Activated B cell treated with CpG ODN at 0.5 μM for 24 hours (primary cell): ENCODE measurements at regions of chr5 and their contacts with region 1.

Region 1: DNA sequence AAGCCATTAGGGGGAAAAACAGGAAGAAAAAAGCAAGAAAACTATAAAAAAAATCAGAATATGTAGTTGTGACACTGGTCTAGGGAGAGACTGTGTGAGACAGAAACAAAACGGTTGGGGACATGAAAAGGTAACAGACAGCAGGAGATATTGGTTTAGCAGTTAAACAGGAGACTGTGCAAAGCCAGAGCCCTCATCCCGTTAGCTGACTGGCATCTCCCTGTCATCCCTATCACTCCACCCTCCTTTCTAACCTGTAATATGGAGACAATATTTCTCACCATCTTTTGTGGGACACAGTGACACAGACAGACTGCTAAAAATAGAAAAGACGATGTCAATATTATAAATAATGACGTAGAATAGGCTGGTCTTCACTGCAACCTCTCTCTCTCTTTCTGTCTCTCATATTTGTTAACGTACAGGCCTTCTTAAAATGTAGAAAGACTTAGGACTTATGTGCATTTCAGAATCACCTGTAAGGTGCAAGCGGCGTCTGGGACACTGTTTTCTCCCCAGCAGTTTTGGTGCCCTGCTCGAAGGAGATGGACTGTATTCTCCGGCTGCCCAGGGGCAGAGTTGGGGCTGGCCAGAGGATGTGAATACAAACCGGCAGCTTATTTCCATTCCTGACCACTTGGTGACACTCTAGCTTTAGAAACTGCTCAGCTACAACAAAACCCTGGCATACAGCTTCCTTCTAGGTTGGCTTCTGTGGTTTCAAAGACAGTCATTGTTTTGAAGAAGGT is 190.6 kb downstream of the MAT2B start:
- DNase-seq: no peak
- ATAC-seq: peak; percentile 95
- H3K4me3 Mint-ChIP-seq: no peak overlapping the region
- H3K27ac Mint-ChIP-seq: no peak overlapping the region
- H3K4me1 Mint-ChIP-seq: peaks cover 9% of the 10 kb centered on the region
- H3K27me3 Mint-ChIP-seq: peaks cover 2% of the 10 kb centered on the region
- CTCF ChIP-seq: peak; percentile 73

Region 2: DNA sequence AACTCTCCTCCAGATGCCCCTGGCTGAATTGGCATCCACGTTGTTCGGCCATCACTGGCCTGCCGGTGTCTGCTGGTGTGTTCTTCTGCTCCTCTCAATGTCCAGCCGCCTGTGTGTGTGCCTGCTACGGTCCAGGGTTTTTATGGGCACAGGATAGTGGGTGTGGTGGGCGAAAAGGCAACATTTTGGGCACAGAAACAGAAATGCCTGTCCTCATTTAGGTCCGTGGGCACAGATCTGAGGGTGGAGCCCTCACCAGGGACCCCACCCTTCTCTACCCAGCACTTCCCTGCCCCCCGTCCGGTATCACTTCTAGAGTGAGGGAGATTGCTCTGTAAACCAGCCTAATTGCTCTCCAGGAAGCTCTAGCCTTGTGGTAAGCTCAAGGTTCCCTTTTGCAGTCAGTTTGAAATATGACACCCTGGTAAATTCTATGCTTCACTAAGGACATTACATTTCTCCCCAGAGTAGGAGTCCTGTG is 219.5 kb after region 1 on chr5:
- CTCF ChIA-PET with region 1: interaction called, 5 read pairs
- POLR2A ChIA-PET with region 1: interaction called, 8 read pairs
- intact Hi-C with region 1: loop called (anchors 1 kb)
- DNase-seq: peak; percentile 50
- ATAC-seq: peak; percentile 59
- H3K4me3 Mint-ChIP-seq: peak overlapping the region; percentile 85
- H3K27ac Mint-ChIP-seq: peak overlapping the region; percentile 99
- H3K4me1 Mint-ChIP-seq: peaks cover 74% of the 10 kb centered on the region
- H3K27me3 Mint-ChIP-seq: no peaks in the 10 kb centered on the region
- CTCF ChIP-seq: no peak

Region 3: GRCh38 chr5:164013077-164013670 is 317.2 kb after region 1 on chr5:
- CTCF ChIA-PET with region 1: interaction called, 29 read pairs
- POLR2A ChIA-PET with region 1: no interaction called
- intact Hi-C with region 1: loop called (anchors 1 kb)
- DNase-seq: no peak
- ATAC-seq: peak; percentile 50
- H3K4me3 Mint-ChIP-seq: no peak overlapping the region
- H3K27ac Mint-ChIP-seq: no peak overlapping the region
- H3K4me1 Mint-ChIP-seq: peaks cover 13% of the 10 kb centered on the region
- H3K27me3 Mint-ChIP-seq: no peaks in the 10 kb centered on the region
- CTCF ChIP-seq: no peak

Region 4: DNA sequence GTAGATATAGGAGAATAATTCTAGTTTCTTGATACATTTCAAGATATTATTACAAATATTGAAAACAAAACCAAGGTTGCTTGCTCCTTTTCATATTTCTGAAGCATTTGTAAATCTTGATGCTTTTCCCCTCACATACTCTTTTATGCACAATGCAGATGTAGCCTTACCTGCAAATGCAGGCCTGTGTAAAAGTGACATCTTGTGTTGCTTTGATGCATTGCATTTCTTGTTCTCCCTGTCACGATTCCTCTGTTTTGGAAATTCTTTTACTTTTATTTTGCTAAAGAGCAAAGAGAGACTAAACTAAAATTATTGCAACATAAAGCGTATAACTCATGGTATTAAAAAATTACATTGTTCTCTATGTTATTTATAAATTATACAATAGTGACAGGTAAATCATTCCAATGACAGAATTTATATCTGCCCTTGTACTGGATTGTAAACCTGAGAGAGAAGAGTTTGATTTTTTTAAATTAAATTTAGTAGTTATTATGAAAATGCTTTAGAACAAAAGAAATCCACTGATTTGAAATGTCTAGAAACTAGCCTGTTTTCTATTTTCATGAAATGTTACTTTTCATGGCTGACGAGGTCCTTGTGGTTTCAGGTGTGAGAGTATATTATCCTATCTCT is 779.5 kb after region 1 on chr5:
- CTCF ChIA-PET with region 1: interaction called, 6 read pairs
- POLR2A ChIA-PET with region 1: no interaction called
- intact Hi-C with region 1: loop called (anchors 1 kb)
- DNase-seq: no peak
- ATAC-seq: no peak
- H3K4me3 Mint-ChIP-seq: no peak overlapping the region
- H3K27ac Mint-ChIP-seq: no peak overlapping the region
- H3K4me1 Mint-ChIP-seq: no peaks in the 10 kb centered on the region
- H3K27me3 Mint-ChIP-seq: peaks cover 1% of the 10 kb centered on the region
- CTCF ChIP-seq: no peak

Region 5: DNA sequence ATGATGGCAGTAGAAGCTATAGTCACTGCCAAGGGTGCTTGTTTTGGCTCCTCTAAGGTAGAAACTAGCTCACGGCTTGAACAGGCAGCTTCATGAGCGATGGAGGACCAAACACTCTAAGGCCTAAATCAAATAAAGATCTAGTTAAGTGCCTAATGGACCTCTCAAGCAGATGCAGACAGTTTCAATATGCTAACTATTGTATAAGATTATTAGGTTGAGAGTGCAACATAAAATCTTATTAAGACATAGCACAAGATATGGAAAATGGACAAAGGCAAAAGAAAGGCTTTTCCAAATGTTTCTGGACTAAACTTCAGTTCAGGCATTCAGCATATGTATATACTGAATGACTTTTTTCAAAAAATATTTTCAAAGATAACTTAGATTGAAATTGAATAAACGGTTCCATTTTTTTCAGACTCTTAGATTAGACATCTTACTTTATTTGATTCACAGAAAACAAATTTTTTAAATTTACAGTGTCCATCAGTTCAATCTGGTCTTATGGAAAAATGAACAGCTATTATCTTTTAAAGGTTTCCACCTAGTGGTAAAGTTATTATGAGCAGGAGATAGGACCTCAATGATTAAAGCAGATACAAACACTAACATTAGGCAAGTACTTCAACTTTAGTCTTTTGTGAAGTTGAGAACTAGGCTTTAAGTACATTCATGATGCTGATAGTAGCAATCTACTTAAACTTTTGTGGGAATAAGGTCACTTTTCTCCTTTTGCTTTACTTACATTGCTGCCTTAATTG is 977.1 kb after region 1 on chr5:
- CTCF ChIA-PET with region 1: no interaction called
- POLR2A ChIA-PET with region 1: no interaction called
- intact Hi-C with region 1: loop called (anchors 1 kb)
- DNase-seq: no peak
- ATAC-seq: no peak
- H3K4me3 Mint-ChIP-seq: no peak overlapping the region
- H3K27ac Mint-ChIP-seq: no peak overlapping the region
- H3K4me1 Mint-ChIP-seq: no peaks in the 10 kb centered on the region
- H3K27me3 Mint-ChIP-seq: no peaks in the 10 kb centered on the region
- CTCF ChIP-seq: no peak

Region 6: DNA sequence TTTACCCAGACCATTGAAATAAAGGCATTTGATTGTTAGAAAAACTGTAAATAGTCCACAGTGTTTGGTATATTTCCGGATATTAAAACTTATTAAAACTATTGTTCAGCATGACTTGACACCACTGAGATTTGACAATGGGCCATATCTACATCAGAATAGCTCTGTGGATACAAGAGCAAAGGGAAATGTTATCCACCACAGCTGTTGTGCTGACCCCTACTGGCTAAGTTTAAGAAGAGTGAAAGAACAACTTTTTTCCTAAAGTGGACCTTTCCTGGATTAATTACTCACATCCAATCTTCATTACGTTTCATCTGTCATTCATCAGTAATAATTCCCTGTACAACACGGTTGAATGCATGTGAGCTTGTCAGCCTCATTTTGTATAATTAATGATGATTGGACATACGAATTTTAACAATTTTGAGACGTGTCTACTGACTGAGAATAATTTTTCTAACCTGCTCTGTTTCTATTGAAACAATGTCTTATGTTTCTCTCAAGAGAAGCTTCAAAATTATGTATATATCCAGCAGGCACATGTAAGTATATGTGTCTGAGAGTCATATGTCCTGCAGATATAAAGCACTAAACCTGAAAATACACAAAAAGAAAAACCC is 1762.0 kb after region 1 on chr5:
- CTCF ChIA-PET with region 1: no interaction called
- POLR2A ChIA-PET with region 1: no interaction called
- intact Hi-C with region 1: loop called (anchors 2 kb)
- DNase-seq: no peak
- ATAC-seq: no peak
- H3K4me3 Mint-ChIP-seq: no peak overlapping the region
- H3K27ac Mint-ChIP-seq: no peak overlapping the region
- H3K4me1 Mint-ChIP-seq: no peaks in the 10 kb centered on the region
- H3K27me3 Mint-ChIP-seq: no peaks in the 10 kb centered on the region
- CTCF ChIP-seq: no peak